PC-3 (cell line): ENCODE measurements at regions of chr3 and their contacts with region 1.

Region 1: DNA sequence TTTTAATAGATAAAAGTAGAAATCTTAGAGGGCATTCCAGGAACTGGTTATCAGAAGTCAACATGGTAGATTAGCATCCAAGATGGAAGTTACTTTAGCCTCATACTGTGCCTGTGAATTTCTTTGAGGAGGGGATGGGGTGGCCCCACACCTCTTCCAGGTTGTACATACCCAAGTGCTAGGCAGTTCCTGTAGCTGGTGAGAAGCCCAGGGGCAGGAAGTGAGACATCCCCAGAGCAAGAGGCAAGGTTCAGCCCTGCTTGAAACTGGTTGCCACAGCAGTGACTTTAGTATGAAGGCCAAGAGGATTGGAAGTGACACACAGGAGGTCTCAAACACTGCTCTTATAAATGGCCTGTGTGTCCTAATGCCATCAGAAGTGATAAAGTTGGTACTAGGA is 11.9 kb downstream of the GTPBP8 start:
- DNase-seq: peak; percentile 14
- ATAC-seq: peak; percentile 68
- H3K4me3 ChIP-seq: no peak overlapping the region
- H3K27ac ChIP-seq: no peak overlapping the region
- H3K4me1 ChIP-seq: no peaks in the 10 kb centered on the region
- H3K27me3 ChIP-seq: no peaks in the 10 kb centered on the region
- CTCF ChIP-seq: no peak

Region 2: DNA sequence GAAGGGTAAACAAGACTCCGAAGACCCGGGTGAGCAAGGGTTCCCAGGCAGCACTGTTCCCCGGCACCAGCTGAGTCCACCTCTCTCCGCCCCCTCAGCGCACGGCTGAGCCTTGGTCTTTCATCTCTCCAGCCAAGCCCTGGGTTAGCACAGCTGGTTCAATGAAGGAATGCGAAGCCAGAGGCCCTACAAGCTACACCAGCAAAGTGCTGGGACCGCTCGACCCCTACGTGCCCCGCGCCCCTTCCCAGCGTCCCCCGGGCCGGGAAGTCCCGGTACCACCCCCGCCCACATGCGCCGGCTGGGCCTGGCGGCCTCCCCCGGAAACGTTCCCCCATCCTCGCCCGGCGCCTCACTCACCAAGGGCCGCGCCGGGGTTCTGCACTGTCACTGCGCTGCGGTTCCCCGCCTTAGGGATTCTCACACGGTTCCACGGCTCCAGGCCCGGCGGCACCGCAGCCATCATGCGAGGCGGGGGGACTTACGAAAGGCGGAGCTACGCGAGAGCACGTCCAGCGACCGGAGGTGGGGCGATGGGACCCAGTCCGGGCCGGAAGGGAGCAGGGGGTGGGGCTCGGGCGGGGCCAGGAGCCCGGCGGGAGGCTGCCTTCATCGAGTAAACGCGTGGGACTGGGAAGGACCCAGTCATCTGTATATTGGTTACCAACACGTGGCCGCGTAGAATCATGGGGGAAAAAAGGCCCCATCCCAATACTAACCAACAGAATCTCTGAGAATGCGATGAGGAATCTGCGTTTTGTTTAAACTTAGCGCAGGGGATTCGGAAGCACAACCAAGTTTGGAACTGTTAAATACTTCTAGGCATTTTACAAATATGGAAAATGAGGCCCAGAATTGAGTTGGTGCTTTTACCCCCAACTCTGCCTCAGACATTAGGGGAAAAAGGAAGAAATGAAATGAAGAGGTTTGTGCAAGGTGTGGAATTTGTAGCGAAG is 16.8 kb after region 1 on chr3:
- CTCF ChIA-PET with region 1: no interaction called
- POLR2A ChIA-PET with region 1: no interaction called
- intact Hi-C with region 1: loop called (anchors 2 kb)
- DNase-seq: peak; percentile 95
- ATAC-seq: peak; percentile 94
- H3K4me3 ChIP-seq: peak overlapping the region; percentile 92
- H3K27ac ChIP-seq: peak overlapping the region; percentile 74
- H3K4me1 ChIP-seq: peaks cover 14% of the 10 kb centered on the region
- H3K27me3 ChIP-seq: no peaks in the 10 kb centered on the region
- CTCF ChIP-seq: no peak

Region 3: DNA sequence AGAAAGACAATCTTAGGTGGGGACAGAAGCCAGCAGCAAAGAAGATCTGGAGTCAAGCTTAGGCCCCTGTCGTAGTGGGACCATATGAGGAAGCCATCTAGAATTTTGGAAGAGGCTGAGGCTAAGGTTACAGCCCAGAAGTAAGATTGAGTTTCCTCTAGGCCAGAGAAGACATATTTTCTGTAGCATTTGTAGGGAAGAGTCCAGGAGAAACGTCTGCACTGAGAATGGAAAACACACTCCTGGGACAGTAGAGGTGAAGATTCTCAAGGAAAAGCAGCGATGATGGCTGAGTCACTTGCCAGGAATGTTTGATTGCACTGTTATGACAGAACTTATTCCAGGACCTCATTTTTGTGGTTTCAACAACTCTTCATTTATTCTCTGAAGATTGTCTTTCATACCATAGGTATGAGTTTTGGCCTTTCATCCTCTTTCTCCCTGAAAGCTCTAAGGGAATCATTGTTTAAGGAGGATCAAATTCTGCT is 95.3 kb after region 1 on chr3:
- CTCF ChIA-PET with region 1: no interaction called
- POLR2A ChIA-PET with region 1: no interaction called
- intact Hi-C with region 1: no loop called
- DNase-seq: peak; percentile 97
- ATAC-seq: peak; percentile 94
- H3K4me3 ChIP-seq: no peak overlapping the region
- H3K27ac ChIP-seq: peak overlapping the region; percentile 31
- H3K4me1 ChIP-seq: peaks cover 23% of the 10 kb centered on the region
- H3K27me3 ChIP-seq: no peaks in the 10 kb centered on the region
- CTCF ChIP-seq: no peak